Dendritic cell treated with granulocyte-macrophage colony-stimulating factor and Interleukin-4, amounts not matched to agents 40 ng/mL and 50 ng/mL, for 4 days (primary cell): ENCODE measurements at regions of chr7 and their contacts with region 1.

Region 1: GRCh38 chr7:112550468-112551060 is 69.8 kb downstream of the LSMEM1 start:
- H3K4me3 Mint-ChIP-seq: no peak overlapping the region
- H3K27ac Mint-ChIP-seq: no peak overlapping the region
- H3K4me1 Mint-ChIP-seq: no peaks in the 10 kb centered on the region
- H3K27me3 Mint-ChIP-seq: no peaks in the 10 kb centered on the region

Region 2: GRCh38 chr7:112500619-112501018 is 49.9 kb before region 1 on chr7:
- intact Hi-C with region 1: no loop called
- H3K4me3 Mint-ChIP-seq: no peak overlapping the region
- H3K27ac Mint-ChIP-seq: no peak overlapping the region
- H3K4me1 Mint-ChIP-seq: peaks cover 27% of the 10 kb centered on the region
- H3K27me3 Mint-ChIP-seq: peaks cover 6% of the 10 kb centered on the region

Region 3: DNA sequence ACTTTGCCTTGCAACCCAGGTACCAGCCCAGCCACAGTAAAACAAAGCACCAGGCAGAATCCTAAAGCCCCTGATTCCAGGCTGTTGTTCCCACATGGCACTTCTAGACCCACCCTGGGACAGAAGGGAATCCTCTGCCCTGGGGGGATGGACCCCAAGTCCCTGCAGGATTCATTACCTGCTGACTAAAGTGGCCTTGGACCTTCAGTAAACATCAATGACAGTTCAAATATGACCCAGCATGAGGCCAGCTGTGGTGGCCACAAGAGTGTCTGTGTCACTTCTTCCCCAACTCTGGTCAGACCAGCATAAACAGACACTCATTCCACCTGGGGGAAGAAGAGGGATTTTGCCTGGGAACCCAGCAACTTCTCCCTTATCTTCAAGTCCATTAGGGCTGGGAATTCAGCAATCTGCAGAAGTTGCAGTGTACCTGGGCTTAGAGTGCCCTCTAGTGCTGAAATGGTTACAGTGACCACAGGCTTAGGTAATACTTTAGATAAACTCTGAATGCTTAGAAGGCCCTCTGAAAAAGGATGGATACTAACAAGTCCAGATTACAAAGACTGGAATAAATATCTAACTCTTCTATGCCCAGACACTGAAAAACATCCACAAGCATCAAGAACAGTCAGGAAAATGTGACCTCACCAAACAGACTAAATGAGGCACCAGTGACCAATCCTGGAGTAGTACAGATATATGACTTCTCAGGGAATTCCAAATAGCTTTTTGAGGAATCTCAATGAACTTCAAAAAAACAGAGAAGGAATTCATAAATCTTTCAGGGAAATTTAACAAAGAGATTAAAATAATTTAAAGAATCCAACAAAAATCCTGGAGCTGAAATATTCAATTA is 348.1 kb after region 1 on chr7:
- intact Hi-C with region 1: loop called (anchors 1 kb)
- H3K4me3 Mint-ChIP-seq: no peak overlapping the region
- H3K27ac Mint-ChIP-seq: no peak overlapping the region
- H3K4me1 Mint-ChIP-seq: peaks cover 6% of the 10 kb centered on the region
- H3K27me3 Mint-ChIP-seq: no peaks in the 10 kb centered on the region

Region 4: DNA sequence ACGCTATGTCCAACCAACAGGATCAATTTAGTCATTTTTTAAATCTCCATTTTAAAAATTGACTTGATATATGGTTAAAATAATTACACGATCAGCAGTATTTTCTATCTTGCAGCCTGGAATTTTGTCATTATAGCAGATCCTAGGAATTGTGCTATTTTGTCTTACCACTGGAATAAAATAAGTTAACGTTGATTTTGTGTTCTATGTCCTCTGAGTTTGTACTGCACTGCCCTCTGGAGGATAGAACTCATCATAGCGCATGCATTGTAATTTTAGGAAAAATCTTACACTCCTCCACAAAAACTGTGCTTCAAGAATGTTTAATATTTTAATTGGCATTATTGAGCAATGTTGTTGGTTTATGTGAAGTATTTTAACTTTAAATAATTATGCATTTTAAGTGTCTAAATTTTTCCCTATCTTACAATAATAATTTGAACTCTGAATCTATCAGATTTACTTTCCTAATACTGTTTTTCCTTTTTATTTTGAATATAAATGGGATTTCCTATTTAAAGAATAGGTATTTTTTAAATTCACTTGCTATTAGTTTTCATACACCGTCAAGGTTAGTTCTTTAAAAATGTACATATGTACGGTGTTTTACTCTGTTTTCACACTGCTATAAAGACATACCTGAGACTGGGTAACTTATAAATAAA is 1148.1 kb after region 1 on chr7:
- intact Hi-C with region 1: loop called (anchors 5 kb)
- H3K4me3 Mint-ChIP-seq: no peak overlapping the region
- H3K27ac Mint-ChIP-seq: no peak overlapping the region
- H3K4me1 Mint-ChIP-seq: no peaks in the 10 kb centered on the region
- H3K27me3 Mint-ChIP-seq: no peaks in the 10 kb centered on the region